ENCODE measurements at regions of chr3 and their contacts with region 1.

Region 1: GRCh38 chr3:108124337-108125152 is 33.7 kb upstream of the CD47 start:
- DNase-seq: peak; percentile 96
- ATAC-seq: peak; percentile 84
- H3K4me3 ChIP-seq: peak overlapping the region; percentile 88
- H3K27ac ChIP-seq: peak overlapping the region; percentile 100
- H3K4me1 ChIP-seq: peaks cover 26% of the 10 kb centered on the region
- H3K27me3 ChIP-seq: no peaks in the 10 kb centered on the region
- CTCF ChIP-seq: no peak
- EP300 ChIP-seq: peak; percentile 54 to 68; a peak in 2 of 4 replicates
- POLR2A ChIP-seq: peak; percentile 76
- RAD21 ChIP-seq: peak; percentile 25

Region 2: GRCh38 chr3:107855708-107856107 is 268.8 kb before region 1 on chr3:
- CTCF ChIA-PET with region 1: no interaction called
- POLR2A ChIA-PET with region 1: no interaction called
- RAD21 ChIA-PET with region 1: no interaction called
- SMC1A ChIA-PET with region 1: no interaction called
- in situ Hi-C with region 1: no loop called
- intact Hi-C with region 1: loop called (anchors 10 kb)
- DNase-seq: no peak
- ATAC-seq: peak; percentile 97
- H3K4me3 ChIP-seq: no peak overlapping the region
- H3K27ac ChIP-seq: no peak overlapping the region
- H3K4me1 ChIP-seq: no peaks in the 10 kb centered on the region; the same call in 1 of the 2 replicates
- H3K27me3 ChIP-seq: no peaks in the 10 kb centered on the region
- CTCF ChIP-seq: peak; percentile 37 to 46 (median 41); a peak in 3 of 6 replicates
- EP300 ChIP-seq: no peak
- POLR2A ChIP-seq: no peak
- RAD21 ChIP-seq: 0 out of 2 replicates have a peak, but pooled peaks have one; percentile 18

Region 3: DNA sequence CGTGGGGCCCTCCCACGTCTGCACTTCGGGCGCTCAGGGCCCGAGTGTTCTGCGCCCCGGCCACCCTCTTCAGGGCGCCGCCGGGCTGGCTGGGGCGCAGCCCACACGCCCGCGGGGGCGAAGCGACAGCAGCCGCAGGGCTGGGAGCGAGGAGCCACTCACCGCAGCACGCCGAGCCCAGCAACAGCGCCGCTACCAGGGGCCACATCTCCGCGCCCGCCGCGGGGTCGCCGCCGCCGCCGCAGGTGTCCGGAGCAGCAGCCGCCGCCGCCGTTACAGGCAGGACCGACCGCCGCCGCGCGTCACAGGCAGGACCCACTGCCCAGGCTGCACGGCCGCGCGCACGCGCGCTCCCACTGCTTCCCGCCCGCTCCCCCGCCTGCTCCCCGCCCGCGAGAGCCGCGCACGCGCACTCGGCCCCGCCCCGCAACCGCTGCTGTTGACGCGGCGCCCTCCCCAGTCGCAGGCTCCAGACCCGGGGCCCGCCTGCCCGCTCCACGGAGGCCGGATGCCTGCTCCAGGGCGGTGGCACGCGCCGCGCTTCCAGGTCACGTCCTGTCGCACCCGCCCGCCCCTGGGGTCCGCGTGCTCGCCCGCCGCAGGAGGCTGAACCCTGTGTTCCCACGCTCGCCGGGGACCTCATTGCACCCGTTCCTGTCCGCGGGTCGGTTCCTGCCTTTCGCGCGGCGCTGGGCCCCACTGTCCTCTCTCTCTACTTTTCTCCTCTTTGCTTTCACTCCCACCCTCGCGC is 33.7 kb before region 1 on chr3 and contains the start of gene CD47:
- CTCF ChIA-PET with region 1: interaction called, 12 read pairs
- POLR2A ChIA-PET with region 1: interaction called, 14 read pairs
- RAD21 ChIA-PET with region 1: interaction called, 23 read pairs
- SMC1A ChIA-PET with region 1: interaction called, 31 read pairs
- in situ Hi-C with region 1: no loop called
- intact Hi-C with region 1: loop called (anchors 1 kb)
- DNase-seq: no peak
- ATAC-seq: peak; percentile 72
- H3K4me3 ChIP-seq: peak within 1 kb of the TSS; percentile 95
- H3K27ac ChIP-seq: peak within 1 kb of the TSS; percentile 95
- H3K4me1 ChIP-seq: peaks cover 12% of the 10 kb centered on the region; the same call in 1 of the 2 replicates
- H3K27me3 ChIP-seq: no peaks in the 10 kb centered on the region
- CTCF ChIP-seq: no peak
- EP300 ChIP-seq: no peak
- POLR2A ChIP-seq: peak; percentile 85
- RAD21 ChIP-seq: no peak
- polyA plus RNA-seq, gene CD47: 22.9 to 61.6 TPM

Region 4: DNA sequence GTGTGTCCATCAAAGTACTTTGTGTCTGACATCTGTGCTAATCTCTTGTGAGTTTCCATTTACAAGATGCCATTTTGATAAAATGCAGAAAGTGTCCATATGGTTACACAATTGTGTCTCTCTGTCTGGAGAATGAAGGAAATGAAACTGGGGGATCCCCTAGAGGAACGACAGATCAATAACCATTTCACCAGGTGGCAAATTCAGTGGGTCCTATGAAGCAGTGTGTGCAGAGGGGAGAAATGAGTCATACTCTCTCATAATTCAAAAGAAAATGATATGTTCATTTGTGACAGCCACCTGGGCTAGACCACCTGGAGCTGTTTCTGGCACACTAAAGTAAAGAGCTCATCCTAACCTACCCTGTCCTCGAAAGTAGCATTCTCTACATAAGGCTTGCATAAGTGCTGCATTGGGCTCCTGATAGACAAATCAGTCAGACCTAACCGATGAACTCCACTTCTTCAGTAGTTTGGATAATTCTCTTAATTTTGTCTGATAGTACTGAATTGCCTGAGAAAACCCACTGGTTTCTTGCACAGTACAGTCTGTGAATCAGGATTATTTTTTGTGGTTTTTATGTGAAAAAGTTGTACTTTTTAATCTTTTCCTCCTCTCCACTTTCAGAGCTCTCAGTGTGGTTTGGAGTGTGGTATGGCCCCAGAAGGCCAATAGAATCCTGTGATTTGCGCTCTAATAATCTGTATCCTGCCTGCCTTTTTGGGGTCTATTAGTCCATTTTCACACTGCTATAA is 23.5 kb before region 1 on chr3:
- CTCF ChIA-PET with region 1: no interaction called
- POLR2A ChIA-PET with region 1: interaction called, 25 read pairs
- RAD21 ChIA-PET with region 1: interaction called, 36 read pairs
- SMC1A ChIA-PET with region 1: interaction called, 34 read pairs
- in situ Hi-C with region 1: no loop called
- intact Hi-C with region 1: loop called (anchors 1 kb)
- DNase-seq: peak; percentile 96
- ATAC-seq: peak; percentile 89
- H3K4me3 ChIP-seq: peak overlapping the region; percentile 26; the same call in 1 of the 2 replicates
- H3K27ac ChIP-seq: peak overlapping the region; percentile 81
- H3K4me1 ChIP-seq: peaks cover 36% of the 10 kb centered on the region
- H3K27me3 ChIP-seq: no peaks in the 10 kb centered on the region
- CTCF ChIP-seq: no peak
- EP300 ChIP-seq: peak; percentile 86 to 92
- POLR2A ChIP-seq: no peak
- RAD21 ChIP-seq: no peak

Region 5: DNA sequence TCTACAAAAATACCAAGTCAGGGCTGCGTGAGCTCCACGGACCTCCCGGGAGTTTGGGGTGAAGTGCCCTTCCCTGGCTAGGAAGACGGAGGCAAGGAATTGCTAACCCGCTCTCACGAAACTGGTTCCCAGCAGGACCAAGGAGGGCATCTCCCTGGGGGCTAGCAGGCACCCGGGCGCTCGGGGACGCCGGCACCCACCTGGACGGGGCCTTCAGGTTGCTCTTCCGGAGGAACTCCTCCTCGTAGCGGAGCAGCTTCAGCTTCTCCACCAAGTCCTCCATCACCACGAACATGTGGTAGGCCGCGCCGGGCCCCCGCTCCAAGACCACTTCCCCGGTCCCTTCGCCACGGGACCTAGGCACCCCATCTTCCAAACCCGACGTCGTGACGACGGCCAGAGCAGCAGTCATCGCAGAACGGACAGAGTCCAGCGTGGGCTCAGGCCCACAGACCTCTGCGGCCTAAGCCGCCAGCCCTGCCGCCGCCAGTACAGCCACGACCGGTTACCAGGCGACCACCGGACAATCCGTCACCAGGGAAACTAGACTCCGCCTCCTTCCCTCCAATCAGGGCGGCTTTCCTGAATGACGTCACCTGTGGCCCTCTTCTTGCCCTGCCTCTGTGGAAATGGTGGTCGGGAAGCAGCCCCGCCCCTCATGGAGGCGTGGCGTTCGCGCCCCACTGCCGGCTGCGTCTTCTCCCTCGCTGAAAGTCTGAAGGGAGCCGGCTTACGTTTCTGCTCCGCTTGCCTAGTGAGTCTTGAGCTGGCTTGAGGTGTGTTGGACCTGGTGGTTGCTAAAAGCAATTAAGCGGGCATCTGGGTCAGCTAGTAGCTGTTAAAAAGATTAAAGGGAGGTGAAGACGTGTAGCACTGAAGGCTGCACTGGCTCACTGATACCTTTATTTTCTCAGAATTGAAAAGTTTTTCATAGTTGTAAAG is 97.6 kb after region 1 on chr3 and contains the start of gene IFT57:
- CTCF ChIA-PET with region 1: interaction called, 3 read pairs
- POLR2A ChIA-PET with region 1: no interaction called
- RAD21 ChIA-PET with region 1: interaction called, 4 read pairs
- SMC1A ChIA-PET with region 1: interaction called, 7 read pairs
- in situ Hi-C with region 1: no loop called
- intact Hi-C with region 1: loop called (anchors 1 kb)
- DNase-seq: peak; percentile 92
- ATAC-seq: peak; percentile 94
- H3K4me3 ChIP-seq: peak within 1 kb of the TSS; percentile 67
- H3K27ac ChIP-seq: peak within 1 kb of the TSS; percentile 65
- H3K4me1 ChIP-seq: peaks cover 9% of the 10 kb centered on the region; the same call in 1 of the 2 replicates
- H3K27me3 ChIP-seq: no peaks in the 10 kb centered on the region
- CTCF ChIP-seq: no peak
- EP300 ChIP-seq: 0 out of 4 replicates have a peak, but pooled peaks of 1 of the 2 experiments have one; percentile 10
- POLR2A ChIP-seq: peak; percentile 75
- RAD21 ChIP-seq: peak; percentile 11; the same call in 1 of the 2 replicates
- polyA plus RNA-seq, gene IFT57: 1.8 to 2.8 TPM

Region 6: DNA sequence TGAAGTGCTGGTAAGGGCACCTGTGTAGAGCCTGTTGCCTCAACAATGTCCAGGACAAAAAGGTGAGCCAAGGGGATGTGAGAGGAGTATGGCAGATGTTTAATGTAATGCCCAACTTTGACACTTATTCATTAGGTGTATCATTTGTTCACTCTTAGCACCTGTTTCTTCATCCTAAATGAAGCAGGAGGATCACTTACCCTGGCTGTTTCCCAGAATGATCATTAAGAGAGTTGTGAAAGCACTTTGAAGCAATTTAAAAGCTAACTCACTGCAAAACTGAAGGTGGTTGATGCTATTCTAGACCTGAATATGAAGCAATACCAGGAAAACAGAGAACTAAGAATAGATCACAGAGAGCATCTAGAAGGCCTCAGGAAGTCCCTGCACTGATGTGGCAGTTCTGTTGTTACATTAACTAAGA is 168.4 kb after region 1 on chr3:
- CTCF ChIA-PET with region 1: interaction called, 3 read pairs
- POLR2A ChIA-PET with region 1: no interaction called
- RAD21 ChIA-PET with region 1: interaction called, 3 read pairs
- SMC1A ChIA-PET with region 1: interaction called, 7 read pairs
- in situ Hi-C with region 1: no loop called
- intact Hi-C with region 1: loop called (anchors 2 kb)
- DNase-seq: peak; percentile 69
- ATAC-seq: peak; percentile 90
- H3K4me3 ChIP-seq: peak overlapping the region; percentile 2; the same call in 1 of the 2 replicates
- H3K27ac ChIP-seq: peak overlapping the region; percentile 48
- H3K4me1 ChIP-seq: peaks cover 30% of the 10 kb centered on the region
- H3K27me3 ChIP-seq: no peaks in the 10 kb centered on the region
- CTCF ChIP-seq: no peak
- EP300 ChIP-seq: peak; percentile 26 to 44; a peak in 1 of 4 replicates
- POLR2A ChIP-seq: no peak
- RAD21 ChIP-seq: no peak

Region 7: DNA sequence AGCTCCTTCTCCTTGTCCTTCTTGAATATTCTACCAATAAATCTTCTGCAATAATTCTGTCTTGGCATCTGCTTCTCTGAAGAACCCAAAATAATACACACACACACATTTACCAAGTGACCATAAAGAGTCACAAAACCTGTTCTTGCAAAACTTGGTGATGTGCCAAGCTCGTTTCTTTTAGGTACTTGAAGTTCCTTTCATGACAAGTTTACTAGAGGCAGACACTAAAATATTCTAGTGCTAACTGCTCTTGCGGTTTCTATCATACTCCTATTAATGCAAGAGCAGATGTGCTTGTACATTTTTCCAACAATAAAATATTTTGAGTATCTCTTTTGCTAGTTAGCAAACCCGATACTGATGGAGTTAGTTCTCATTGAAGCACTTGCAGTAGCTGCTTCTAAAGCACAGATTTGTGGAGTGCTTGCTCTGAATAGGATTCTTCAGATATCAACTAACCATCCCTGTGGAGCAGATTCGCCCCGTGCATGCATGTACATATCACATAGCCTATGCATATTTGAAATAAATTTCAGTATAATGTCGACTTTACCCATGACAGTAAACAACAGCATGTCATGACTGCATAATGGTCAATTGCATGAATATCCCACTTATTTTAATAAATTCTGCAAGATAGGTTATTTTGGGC is 195.0 kb after region 1 on chr3:
- CTCF ChIA-PET with region 1: no interaction called
- POLR2A ChIA-PET with region 1: no interaction called
- RAD21 ChIA-PET with region 1: no interaction called
- SMC1A ChIA-PET with region 1: no interaction called
- in situ Hi-C with region 1: no loop called
- intact Hi-C with region 1: no loop called
- DNase-seq: no peak
- ATAC-seq: no peak
- H3K4me3 ChIP-seq: no peak overlapping the region
- H3K27ac ChIP-seq: no peak overlapping the region
- H3K4me1 ChIP-seq: no peaks in the 10 kb centered on the region
- H3K27me3 ChIP-seq: no peaks in the 10 kb centered on the region
- CTCF ChIP-seq: no peak
- EP300 ChIP-seq: no peak
- POLR2A ChIP-seq: no peak
- RAD21 ChIP-seq: no peak

Region 8: DNA sequence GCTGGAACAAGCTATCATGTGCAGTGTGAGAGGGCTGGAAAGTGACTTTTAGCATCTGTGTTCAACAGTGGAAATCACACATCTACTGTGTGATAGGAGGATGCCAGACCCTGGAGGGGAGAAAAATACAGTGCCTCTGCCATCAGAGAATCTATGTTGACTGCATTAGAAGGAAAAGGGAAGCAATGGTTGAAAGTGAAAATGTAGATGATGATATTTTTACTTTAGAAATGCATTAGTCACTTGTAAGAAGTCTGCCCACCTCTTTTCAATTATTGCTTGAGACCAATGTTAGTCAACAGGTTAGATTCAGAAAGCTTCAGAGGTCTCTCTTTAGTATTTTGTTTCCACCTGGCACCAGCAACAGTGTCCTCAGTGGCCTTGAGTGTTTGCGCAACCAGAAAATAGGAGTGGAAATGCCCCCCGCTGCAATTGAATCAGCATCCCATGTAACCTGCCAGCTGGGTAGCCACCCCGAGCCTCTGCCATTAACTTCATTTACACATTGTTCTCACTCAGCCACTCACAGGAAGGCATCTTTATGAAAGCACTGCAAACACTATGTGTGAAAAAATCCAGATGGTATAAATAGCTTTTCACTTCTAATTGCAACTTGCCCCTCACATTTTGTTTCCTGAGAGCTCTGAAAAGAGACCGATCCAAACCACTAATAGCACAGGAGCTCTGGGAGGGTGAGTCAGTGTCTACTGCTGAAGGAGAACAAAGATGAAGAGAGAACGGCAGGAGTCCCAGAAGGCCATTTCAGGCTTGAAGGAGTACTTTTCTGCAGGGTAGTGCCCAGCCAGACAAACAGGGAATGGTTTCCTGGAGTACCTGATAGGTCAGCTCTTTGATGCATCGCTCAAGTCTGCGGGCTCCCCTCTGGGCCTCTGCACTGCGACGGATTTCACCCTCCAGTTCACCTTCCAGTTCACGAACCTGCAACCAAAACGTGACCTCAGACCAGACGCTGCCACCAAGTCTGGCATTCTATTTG is 263.9 kb after region 1 on chr3:
- CTCF ChIA-PET with region 1: no interaction called
- POLR2A ChIA-PET with region 1: no interaction called
- RAD21 ChIA-PET with region 1: interaction called, 17 read pairs
- SMC1A ChIA-PET with region 1: interaction called, 4 read pairs
- in situ Hi-C with region 1: no loop called
- intact Hi-C with region 1: no loop called
- DNase-seq: peak; percentile 70
- ATAC-seq: peak; percentile 84
- H3K4me3 ChIP-seq: peak overlapping the region; percentile 42
- H3K27ac ChIP-seq: peak overlapping the region; percentile 33; the same call in 1 of the 2 replicates
- H3K4me1 ChIP-seq: peaks cover 33% of the 10 kb centered on the region
- H3K27me3 ChIP-seq: no peaks in the 10 kb centered on the region
- CTCF ChIP-seq: no peak
- EP300 ChIP-seq: peak; percentile 38 to 48; a peak in 1 of 4 replicates
- POLR2A ChIP-seq: no peak
- RAD21 ChIP-seq: no peak

Measured in GM12878 (cell line).